AG04450 (cell line): ENCODE measurements at regions of chr4 and their contacts with region 1.

Region 1: DNA sequence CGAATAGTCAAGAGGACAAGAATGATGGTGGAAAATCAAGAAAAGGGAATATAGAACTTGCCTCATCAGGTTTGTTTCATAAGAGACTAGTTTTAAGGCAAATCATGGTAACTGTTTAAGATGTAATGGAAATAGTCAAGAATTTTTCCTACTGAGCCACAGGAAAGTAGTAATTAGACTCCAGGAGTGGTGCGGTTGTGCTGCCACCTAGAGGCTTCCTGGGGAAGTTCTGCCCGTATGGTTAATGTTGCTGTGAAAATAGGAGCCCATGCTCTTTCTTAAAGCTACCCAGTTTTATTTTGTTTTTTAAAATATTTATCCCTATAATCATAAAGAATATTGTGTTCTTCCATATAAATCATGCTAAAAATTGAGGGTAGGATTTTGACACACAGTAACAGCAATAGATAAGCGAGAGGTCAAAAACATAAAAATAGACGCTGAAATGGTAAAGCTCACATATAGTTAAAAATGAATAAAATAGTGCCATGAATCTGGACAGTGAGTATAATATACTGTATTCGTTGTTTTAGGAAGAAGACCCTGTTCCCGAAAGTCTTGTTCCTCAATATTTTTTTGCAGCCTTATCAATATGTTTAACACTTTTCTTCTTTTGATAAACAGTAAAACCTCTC is 87.0 kb downstream of the PHOX2B start:
- DNase-seq: peak; percentile 11
- H3K4me3 ChIP-seq: no peak overlapping the region
- H3K27ac ChIP-seq: no peak overlapping the region
- H3K27me3 ChIP-seq: peaks cover 2% of the 10 kb centered on the region
- CTCF ChIP-seq: peak; percentile 98

Region 2: GRCh38 chr4:41106081-41106480 is 555.5 kb before region 1 on chr4:
- CTCF ChIA-PET with region 1: no interaction called
- POLR2A ChIA-PET with region 1: no interaction called
- DNase-seq: no peak
- H3K4me3 ChIP-seq: no peak overlapping the region
- H3K27ac ChIP-seq: no peak overlapping the region
- H3K27me3 ChIP-seq: no peaks in the 10 kb centered on the region
- CTCF ChIP-seq: no peak

Region 3: GRCh38 chr4:41281038-41281634 is 380.4 kb before region 1 on chr4:
- CTCF ChIA-PET with region 1: interaction called, 278 read pairs
- POLR2A ChIA-PET with region 1: interaction called, 3 read pairs
- DNase-seq: no peak
- H3K4me3 ChIP-seq: no peak overlapping the region
- H3K27ac ChIP-seq: no peak overlapping the region
- H3K27me3 ChIP-seq: no peaks in the 10 kb centered on the region
- CTCF ChIP-seq: peak; percentile 91

Region 4: GRCh38 chr4:41297832-41298231 is 363.7 kb before region 1 on chr4:
- CTCF ChIA-PET with region 1: interaction called, 12 read pairs
- POLR2A ChIA-PET with region 1: no interaction called
- DNase-seq: no peak
- H3K4me3 ChIP-seq: no peak overlapping the region
- H3K27ac ChIP-seq: no peak overlapping the region
- H3K27me3 ChIP-seq: peaks cover 2% of the 10 kb centered on the region
- CTCF ChIP-seq: no peak